ENCODE measurements at regions of chr2 and their contacts with region 1.

Region 1: DNA sequence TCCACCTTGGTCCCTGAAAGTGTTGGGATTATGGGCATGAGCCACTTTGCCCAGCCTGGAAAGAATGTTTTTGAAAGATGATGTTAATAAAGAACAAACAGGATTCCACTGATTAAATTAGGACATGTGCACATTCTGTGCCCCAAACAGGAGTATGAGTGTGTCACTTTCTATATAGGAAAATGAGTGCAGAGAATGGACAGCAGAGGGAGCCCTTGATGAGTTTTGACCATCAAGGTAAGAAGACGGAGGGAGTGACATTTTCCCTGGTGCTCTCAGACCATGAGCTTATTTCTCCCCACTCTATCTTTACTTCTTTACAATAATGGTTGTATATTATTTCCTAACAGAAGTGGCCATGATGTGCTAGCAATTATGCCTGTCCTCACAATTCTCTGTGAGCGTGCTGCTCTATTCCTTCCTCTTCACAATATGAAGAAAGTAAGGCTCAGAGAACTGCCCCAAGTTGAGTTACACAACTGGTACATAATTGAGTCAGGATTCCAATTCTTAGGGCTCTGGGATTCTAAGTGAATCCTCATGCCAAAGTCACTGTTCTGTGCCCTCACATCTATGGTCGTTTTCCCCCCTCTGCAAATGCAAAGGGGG is 20.6 kb downstream of the RPL37A start:
- DNase-seq: peak; percentile 82
- ATAC-seq: peak; percentile 79
- H3K4me3 Mint-ChIP-seq: no peak overlapping the region
- H3K27ac Mint-ChIP-seq: no peak overlapping the region
- H3K4me1 Mint-ChIP-seq: no peaks in the 10 kb centered on the region
- H3K27me3 Mint-ChIP-seq: no peaks in the 10 kb centered on the region
- CTCF ChIP-seq: peak; percentile 77

Region 2: DNA sequence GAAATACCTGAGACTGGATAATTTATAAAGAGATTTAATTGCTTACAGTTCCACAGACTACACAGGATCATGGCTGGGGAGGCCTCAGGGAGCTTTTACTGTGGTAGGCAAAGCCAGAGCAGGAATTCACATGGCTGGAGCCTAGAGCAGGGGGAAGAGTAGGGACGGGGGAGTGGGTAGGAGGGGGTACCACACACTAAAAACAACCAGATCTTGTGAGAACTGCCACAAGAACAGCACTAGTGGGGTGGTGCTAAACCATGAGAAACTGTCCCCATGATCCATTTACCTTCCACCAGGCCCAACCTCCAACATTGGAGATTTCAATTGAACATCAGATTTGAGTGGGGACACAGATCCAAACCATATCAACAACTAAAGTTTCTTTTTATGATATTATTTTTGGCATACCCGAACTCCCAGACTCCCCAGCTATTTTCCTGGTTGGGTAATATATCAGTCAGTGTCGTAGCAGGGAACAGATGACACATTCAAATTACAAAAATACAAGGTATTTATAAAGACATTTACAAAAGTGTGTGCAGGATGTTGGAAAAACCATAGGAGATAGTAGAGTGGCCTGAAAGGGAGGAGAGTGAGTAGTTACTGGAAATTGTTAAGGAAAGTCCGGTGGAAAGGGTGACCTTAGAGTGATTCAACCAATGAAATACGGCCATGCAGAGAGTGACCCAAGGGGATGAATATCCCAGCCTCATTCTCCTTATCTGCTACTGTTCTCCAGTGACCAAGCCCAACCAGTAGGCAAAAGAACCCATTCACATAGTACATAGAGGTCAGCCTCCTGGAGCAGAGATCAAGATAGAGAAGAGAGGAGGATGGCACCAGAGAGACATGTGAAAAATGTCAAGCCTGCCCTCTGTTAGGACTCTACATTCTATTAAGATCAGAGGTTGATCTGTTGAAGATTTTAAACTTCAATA is 11.8 kb before region 1 on chr2:
- CTCF ChIA-PET with region 1: interaction called, 40 read pairs
- POLR2A ChIA-PET with region 1: interaction called, 5 read pairs
- intact Hi-C with region 1: no loop called
- DNase-seq: no peak
- ATAC-seq: no peak
- H3K4me3 Mint-ChIP-seq: no peak overlapping the region
- H3K27ac Mint-ChIP-seq: peak overlapping the region; percentile 4
- H3K4me1 Mint-ChIP-seq: peaks cover 22% of the 10 kb centered on the region
- H3K27me3 Mint-ChIP-seq: no peaks in the 10 kb centered on the region
- CTCF ChIP-seq: no peak

Region 3: GRCh38 chr2:216619411-216620393 is 100.4 kb after region 1 on chr2:
- CTCF ChIA-PET with region 1: interaction called, 20 read pairs
- POLR2A ChIA-PET with region 1: no interaction called
- intact Hi-C with region 1: no loop called
- DNase-seq: peak; percentile 59
- ATAC-seq: peak; percentile 79
- H3K4me3 Mint-ChIP-seq: peak overlapping the region; percentile 41
- H3K27ac Mint-ChIP-seq: peak overlapping the region; percentile 88
- H3K4me1 Mint-ChIP-seq: peaks cover 23% of the 10 kb centered on the region
- H3K27me3 Mint-ChIP-seq: no peaks in the 10 kb centered on the region
- CTCF ChIP-seq: no peak

Region 4: GRCh38 chr2:216651351-216651881 is 132.2 kb after region 1 on chr2:
- CTCF ChIA-PET with region 1: interaction called, 35 read pairs
- POLR2A ChIA-PET with region 1: no interaction called
- intact Hi-C with region 1: no loop called
- DNase-seq: no peak
- ATAC-seq: no peak
- H3K4me3 Mint-ChIP-seq: no peak overlapping the region
- H3K27ac Mint-ChIP-seq: no peak overlapping the region
- H3K4me1 Mint-ChIP-seq: peaks cover 21% of the 10 kb centered on the region
- H3K27me3 Mint-ChIP-seq: peaks cover 7% of the 10 kb centered on the region
- CTCF ChIP-seq: no peak

Region 5: GRCh38 chr2:216666461-216667233 is 147.4 kb after region 1 on chr2:
- CTCF ChIA-PET with region 1: interaction called, 311 read pairs
- POLR2A ChIA-PET with region 1: interaction called, 5 read pairs
- intact Hi-C with region 1: loop called (anchors 1 kb)
- DNase-seq: peak; percentile 76
- ATAC-seq: peak; percentile 92
- H3K4me3 Mint-ChIP-seq: no peak overlapping the region
- H3K27ac Mint-ChIP-seq: no peak overlapping the region
- H3K4me1 Mint-ChIP-seq: no peaks in the 10 kb centered on the region
- H3K27me3 Mint-ChIP-seq: no peaks in the 10 kb centered on the region
- CTCF ChIP-seq: peak; percentile 97